Keratinocyte (primary cell): ENCODE measurements at regions of chr9 and their contacts with region 1.

Region 1: DNA sequence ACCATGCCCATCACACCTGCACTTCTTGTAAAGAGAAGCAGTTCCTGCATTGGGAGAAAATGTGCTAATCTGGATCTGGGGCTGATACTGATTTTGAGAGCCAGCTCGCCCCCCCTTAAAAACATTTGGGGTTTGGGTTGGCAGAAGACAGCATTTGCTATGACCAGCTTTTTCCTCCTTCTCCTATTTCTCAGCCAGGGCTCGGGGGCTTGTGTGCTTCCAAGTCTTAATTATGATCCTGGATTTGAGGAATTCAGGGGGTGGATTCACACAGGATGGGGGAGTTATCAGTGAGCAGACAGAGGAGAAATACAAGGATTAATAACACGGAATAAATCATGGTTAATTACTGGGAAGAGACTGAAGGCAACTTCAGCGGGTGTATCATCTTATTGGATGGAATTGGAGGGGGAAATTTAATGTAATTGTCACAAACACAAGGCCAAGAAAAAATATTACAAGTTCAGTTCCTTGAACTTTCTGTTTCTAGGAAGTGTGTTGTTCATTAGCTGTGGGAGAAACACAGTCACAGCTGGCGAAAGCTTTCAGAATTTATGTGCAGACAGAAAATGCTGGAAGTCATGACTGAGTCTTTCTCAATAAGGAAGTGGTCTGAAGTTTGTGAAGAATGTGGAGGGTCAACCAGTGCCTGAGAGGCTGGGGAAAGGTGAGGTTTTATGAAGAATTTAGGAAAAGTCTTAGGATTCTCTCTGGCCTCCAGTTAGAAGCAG is 15.3 kb downstream of the C9orf152 start:
- DNase-seq: no peak
- H3K4me3 ChIP-seq: no peak overlapping the region
- H3K27ac ChIP-seq: no peak overlapping the region
- H3K4me1 ChIP-seq: no peaks in the 10 kb centered on the region
- H3K27me3 ChIP-seq: no peaks in the 10 kb centered on the region
- CTCF ChIP-seq: no peak

Region 2: GRCh38 chr9:110303133-110303532 is 110.4 kb after region 1 on chr9:
- dilution Hi-C with region 1: no loop called
- DNase-seq: no peak
- H3K4me3 ChIP-seq: no peak overlapping the region
- H3K27ac ChIP-seq: no peak overlapping the region
- H3K4me1 ChIP-seq: no peaks in the 10 kb centered on the region
- H3K27me3 ChIP-seq: no peaks in the 10 kb centered on the region
- CTCF ChIP-seq: no peak

Region 3: GRCh38 chr9:110615498-110615897 is 422.8 kb after region 1 on chr9:
- dilution Hi-C with region 1: loop called (anchors 10 kb)
- DNase-seq: no peak
- H3K4me3 ChIP-seq: no peak overlapping the region
- H3K27ac ChIP-seq: no peak overlapping the region
- H3K4me1 ChIP-seq: no peaks in the 10 kb centered on the region
- H3K27me3 ChIP-seq: no peaks in the 10 kb centered on the region
- CTCF ChIP-seq: no peak